Ovary (tissue), 10 donors: ENCODE measurements at regions of chr1 and their contacts with region 1.

Region 1: GRCh38 chr1:63705078-63705477 is 68.7 kb upstream of the ROR1 start:
- DNase-seq: no peak
- H3K4me3 ChIP-seq: no peak overlapping the region
- H3K27ac ChIP-seq: no peak overlapping the region
- H3K4me1 ChIP-seq: no peaks in the 10 kb centered on the region
- H3K27me3 ChIP-seq: no peaks in the 10 kb centered on the region
- CTCF ChIP-seq: no peak
- EP300 ChIP-seq: no peak
- POLR2A ChIP-seq: no peak

Region 2: DNA sequence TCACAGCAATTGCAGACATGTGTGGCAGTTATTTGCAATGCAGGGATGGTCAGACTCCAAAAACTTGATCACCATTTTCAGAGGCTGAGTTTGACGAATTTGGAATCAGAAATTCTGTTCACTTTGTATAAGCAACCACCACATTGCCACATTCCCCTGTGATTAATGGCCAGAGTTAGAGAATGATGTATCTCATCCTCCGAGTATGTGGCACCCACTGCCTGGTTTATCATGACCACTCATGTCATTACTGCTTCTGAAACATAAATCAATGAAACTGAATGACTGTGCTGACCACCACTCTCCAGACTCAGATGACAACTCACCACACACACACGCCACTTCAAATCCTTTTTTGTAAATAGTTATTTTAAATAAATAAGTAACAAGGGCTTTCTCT is 698.3 kb after region 1 on chr1:
- intact Hi-C with region 1: loop called in 1 of 4 experiments (anchors 10 kb)
- DNase-seq: no peak
- H3K4me3 ChIP-seq: no peak overlapping the region
- H3K27ac ChIP-seq: no peak overlapping the region
- H3K4me1 ChIP-seq: no peaks in the 10 kb centered on the region
- H3K27me3 ChIP-seq: no peaks in the 10 kb centered on the region
- CTCF ChIP-seq: no peak
- EP300 ChIP-seq: no peak
- POLR2A ChIP-seq: no peak